ENCODE measurements at regions of chr19 and their contacts with region 1.

Region 1: GRCh38 chr19:12766051-12766521 is 9.3 kb downstream of the HOOK2 start:
- DNase-seq: peak; percentile 75 to 92 (median 86)
- H3K4me3 ChIP-seq: peak overlapping the region in 1 of 4 donors; percentile 60
- H3K27ac ChIP-seq: peak overlapping the region in 2 of 5 donors; percentile 54 to 72
- H3K4me1 ChIP-seq: no peaks in the 10 kb centered on the region
- H3K27me3 ChIP-seq: no peaks in the 10 kb centered on the region
- CTCF ChIP-seq: peak; percentile 60 to 95 (median 82)
- POLR2A ChIP-seq: peak in 1 of 2 donors; percentile 47

Region 2: DNA sequence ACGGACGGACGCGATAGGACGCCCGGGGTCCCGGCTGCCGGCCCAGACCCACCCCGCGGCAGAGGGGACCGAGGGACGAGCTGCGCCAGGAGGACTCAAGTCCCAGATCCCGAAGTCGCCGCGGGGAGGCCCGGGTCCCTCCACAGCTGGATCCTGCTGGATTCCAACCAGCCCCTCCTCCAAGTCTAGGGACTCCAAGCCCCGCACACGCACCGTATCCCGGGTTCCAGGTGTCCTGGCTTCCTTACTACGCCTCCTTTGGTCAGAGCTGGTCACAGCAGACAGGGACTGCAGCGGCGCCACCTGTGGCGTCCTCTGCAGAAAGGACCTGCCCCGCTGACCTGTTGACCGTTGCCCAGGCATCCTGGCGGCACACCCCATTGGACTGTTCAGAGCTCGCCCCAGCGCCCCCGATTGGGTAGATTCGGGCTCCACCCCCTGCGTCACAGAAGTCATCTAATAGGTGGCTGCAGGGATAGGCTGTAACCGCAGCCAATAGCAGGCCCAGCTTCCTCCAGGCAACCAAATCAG is 252.5 kb before region 1 on chr19:
- intact Hi-C with region 1: no loop called
- DNase-seq: peak in 6 of 7 donors; percentile 16 to 57 (median 26)
- H3K4me3 ChIP-seq: peak overlapping the region in 1 of 4 donors; percentile 23
- H3K27ac ChIP-seq: no peak overlapping the region
- H3K4me1 ChIP-seq: no peaks in the 10 kb centered on the region
- H3K27me3 ChIP-seq: no peaks in the 10 kb centered on the region
- CTCF ChIP-seq: no peak
- POLR2A ChIP-seq: no peak

Region 3: DNA sequence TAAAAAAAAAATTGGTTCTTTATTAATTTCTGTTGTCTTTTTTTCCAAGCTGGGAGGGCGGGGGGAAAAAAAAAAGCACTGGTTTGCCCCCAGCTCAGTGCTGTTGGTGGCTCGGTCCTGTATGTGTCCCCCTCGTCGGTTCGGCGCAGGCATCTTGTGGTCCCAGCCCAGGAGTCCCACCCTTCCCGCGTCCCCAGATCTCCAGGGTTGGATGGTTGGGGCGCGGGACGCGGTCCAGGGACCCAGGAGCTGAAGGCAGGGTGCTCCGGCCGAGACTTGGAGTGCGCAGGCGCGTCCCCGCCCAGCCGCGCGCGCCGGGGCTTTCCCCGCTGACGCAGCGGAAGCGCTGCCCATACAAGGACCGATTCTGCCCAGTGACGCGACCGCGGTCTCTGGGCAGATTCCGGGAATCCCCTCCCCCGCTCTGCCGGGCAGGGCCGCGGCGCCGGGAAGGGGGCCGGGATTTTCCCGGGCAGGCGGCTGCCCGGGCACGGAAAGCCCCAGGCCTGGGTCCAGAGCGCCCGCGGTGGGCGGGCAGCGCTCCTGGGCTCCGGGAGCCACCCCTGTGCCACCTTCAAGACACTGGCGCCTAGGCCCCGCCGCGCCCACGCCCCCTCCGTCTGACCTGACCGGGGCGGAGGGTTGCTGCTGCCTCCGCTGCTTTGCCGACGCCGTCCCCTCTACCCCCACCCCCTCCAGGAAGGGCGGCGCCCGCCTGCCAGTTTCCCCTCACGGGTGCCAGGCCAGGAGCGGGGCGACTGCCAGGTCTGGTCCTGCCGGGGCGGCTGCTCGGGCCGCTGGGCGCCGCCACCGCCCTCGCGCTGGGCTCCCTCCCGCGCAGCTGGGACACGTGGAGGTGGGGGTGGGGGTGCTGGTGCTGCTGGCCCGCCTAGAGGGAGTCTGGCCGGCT is 27.5 kb after region 1 on chr19:
- intact Hi-C with region 1: loop called in 1 of 2 experiments (anchors 5 kb)
- DNase-seq: peak; percentile 95 to 97 (median 96)
- H3K4me3 ChIP-seq: peak overlapping the region in 3 of 4 donors; percentile 74 to 80 (median 77)
- H3K27ac ChIP-seq: peak overlapping the region; percentile 93 to 99 (median 98)
- H3K4me1 ChIP-seq: peaks cover 21 to 36% of the 10 kb centered on the region in 2 donors
- H3K27me3 ChIP-seq: no peaks in the 10 kb centered on the region
- CTCF ChIP-seq: peak in 2 of 6 experiments; percentile 1 to 16
- POLR2A ChIP-seq: peak; percentile 84 to 90

Region 4: GRCh38 chr19:12801466-12802266 is 35.6 kb after region 1 on chr19 and contains the starts of genes PRDX2 and THSD8:
- intact Hi-C with region 1: loop called (anchors 5 kb)
- DNase-seq: peak; percentile 81 to 90 (median 87)
- H3K4me3 ChIP-seq: peak within 1 kb of the TSS; percentile 29 to 91 (median 56)
- H3K27ac ChIP-seq: peak within 1 kb of the TSS in 4 of 5 donors; percentile 66 to 88 (median 80)
- H3K4me1 ChIP-seq: peaks cover 6 to 21% of the 10 kb centered on the region in 2 donors
- H3K27me3 ChIP-seq: no peaks in the 10 kb centered on the region
- CTCF ChIP-seq: peak in 4 of 6 experiments; percentile 3 to 24 (median 13)
- POLR2A ChIP-seq: peak; percentile 95
- total RNA-seq, gene PRDX2: 597 to 1,660 (median 849) TPM
- total RNA-seq, gene THSD8: 1.8 to 8.6 (median 4.7) TPM in 5 of 9 donors, not detected in the others

Region 5: DNA sequence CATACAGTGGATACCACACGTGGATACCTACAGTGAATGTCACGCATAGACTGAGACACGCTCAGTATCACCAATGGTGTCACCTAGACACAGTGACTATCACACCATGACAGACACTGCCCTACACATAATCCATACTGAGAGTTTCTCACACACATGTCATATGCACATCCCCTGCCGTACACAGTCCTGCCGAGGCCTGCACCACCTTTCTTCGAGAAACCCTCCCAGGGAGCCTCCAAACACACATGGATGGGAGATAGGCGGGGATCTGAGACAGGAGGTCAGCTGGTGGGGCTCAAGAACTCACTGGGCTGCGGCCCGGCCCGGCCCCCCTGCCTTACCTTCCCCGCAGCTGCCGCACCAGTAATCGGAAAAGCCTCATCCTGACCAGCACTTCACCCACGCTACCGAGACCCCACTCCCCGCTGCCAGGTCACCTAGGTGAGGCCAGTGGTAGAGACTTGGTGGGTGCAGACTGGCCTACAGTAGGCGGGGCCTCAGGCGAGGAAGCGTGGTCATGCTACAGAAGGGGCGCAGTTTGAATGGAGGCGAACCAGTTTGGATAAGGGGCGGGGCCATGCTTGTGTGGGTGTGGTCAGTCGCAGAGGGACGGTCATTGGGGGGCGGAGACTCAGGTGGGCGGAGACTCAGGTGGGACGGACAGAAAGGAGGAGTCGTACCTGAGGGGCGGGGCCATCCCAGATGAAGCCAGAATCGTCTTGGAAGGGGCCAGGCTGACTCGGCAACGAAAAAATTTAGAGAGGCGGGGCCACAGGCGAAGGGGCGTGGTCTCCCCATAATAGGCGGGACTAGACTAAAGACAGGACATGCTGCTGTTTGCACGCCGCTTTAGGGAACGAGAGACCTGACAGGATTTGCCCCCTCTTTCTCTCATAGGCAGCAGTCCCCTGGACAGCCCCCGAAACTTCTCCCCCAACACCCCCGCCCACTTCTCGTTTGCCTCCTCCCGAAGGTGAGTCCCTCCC is 74.3 kb after region 1 on chr19:
- intact Hi-C with region 1: loop called (anchors 5 to 10 kb)
- DNase-seq: peak; percentile 64 to 94 (median 85)
- H3K4me3 ChIP-seq: peak overlapping the region in 1 of 4 donors; percentile 45
- H3K27ac ChIP-seq: peak overlapping the region in 1 of 5 donors; percentile 49
- H3K4me1 ChIP-seq: peaks cover 7 to 10% of the 10 kb centered on the region in 2 donors
- H3K27me3 ChIP-seq: peaks cover 80% of the 10 kb centered on the region
- CTCF ChIP-seq: no peak
- POLR2A ChIP-seq: no peak

Region 6: GRCh38 chr19:12847159-12848139 is 81.4 kb after region 1 on chr19:
- intact Hi-C with region 1: loop called (anchors 5 to 10 kb)
- DNase-seq: peak; percentile 85 to 95 (median 91)
- H3K4me3 ChIP-seq: peak overlapping the region in 1 of 4 donors; percentile 21
- H3K27ac ChIP-seq: peak overlapping the region in 1 of 5 donors; percentile 52
- H3K4me1 ChIP-seq: peaks cover 0 to 8% of the 10 kb centered on the region in 2 donors
- H3K27me3 ChIP-seq: peaks cover 25% of the 10 kb centered on the region
- CTCF ChIP-seq: peak; percentile 85 to 100 (median 96)
- POLR2A ChIP-seq: no peak